Motor neuron (in vitro differentiated cells): ENCODE measurements at regions of chr3 and their contacts with region 1.

Region 1: GRCh38 chr3:11803977-11804892 is 42.5 kb downstream of the TAMM41 start:
- ATAC-seq: peak in 4 of 8 experiments; percentile 44 to 86 (median 80)
- H3K4me3 ChIP-seq: no peak overlapping the region
- H3K27ac ChIP-seq: no peak overlapping the region
- H3K4me1 ChIP-seq: no peaks in the 10 kb centered on the region

Region 2: GRCh38 chr3:11651900-11652299 is 152.3 kb before region 1 on chr3:
- in situ Hi-C with region 1: loop called in 2 of 9 experiments (anchors 25 kb)
- ATAC-seq: no peak
- H3K4me3 ChIP-seq: no peak overlapping the region
- H3K27ac ChIP-seq: no peak overlapping the region
- H3K4me1 ChIP-seq: no peaks in the 10 kb centered on the region

Region 3: GRCh38 chr3:11846281-11847034 is 42.2 kb after region 1 on chr3 and contains the start of gene TAMM41:
- in situ Hi-C with region 1: no loop called
- ATAC-seq: peak; percentile 95 to 100 (median 100)
- H3K4me3 ChIP-seq: peak within 1 kb of the TSS; percentile 61 to 93 (median 70)
- H3K27ac ChIP-seq: peak within 1 kb of the TSS; percentile 57 to 74
- H3K4me1 ChIP-seq: peaks cover 9 to 17% of the 10 kb centered on the region in 2 donors
- total RNA-seq, gene TAMM41: 8.8 to 35.0 (median 12.1) TPM